AG04449 (cell line): ENCODE measurements at regions of chr19 and their contacts with region 1.

Region 1: GRCh38 chr19:52237771-52238400 is 31.5 kb upstream of the ZNF766 start:
- DNase-seq: peak; percentile 23
- H3K4me3 ChIP-seq: no peak overlapping the region
- CTCF ChIP-seq: peak; percentile 83

Region 2: DNA sequence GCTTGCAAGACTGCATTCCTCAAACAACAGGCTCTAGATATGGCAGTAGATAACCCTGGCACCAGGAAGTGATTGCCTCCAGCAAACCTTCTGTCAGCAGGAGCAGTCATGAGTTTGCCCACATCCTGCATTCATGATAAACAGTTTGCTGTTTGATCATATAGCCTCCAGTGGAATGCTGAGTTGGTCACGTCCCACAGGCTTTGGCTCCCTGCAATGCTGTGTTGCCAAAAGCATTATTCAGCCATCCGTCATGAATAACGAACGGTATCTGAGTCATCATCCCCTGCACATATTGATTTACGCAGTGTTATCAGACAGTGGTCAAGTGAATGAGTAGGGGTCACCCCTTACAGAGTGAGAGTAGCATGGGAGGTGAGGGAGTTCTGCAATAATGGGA is 167.4 kb before region 1 on chr19:
- CTCF ChIA-PET with region 1: no interaction called
- POLR2A ChIA-PET with region 1: no interaction called
- DNase-seq: no peak
- H3K4me3 ChIP-seq: no peak overlapping the region
- CTCF ChIP-seq: no peak

Region 3: DNA sequence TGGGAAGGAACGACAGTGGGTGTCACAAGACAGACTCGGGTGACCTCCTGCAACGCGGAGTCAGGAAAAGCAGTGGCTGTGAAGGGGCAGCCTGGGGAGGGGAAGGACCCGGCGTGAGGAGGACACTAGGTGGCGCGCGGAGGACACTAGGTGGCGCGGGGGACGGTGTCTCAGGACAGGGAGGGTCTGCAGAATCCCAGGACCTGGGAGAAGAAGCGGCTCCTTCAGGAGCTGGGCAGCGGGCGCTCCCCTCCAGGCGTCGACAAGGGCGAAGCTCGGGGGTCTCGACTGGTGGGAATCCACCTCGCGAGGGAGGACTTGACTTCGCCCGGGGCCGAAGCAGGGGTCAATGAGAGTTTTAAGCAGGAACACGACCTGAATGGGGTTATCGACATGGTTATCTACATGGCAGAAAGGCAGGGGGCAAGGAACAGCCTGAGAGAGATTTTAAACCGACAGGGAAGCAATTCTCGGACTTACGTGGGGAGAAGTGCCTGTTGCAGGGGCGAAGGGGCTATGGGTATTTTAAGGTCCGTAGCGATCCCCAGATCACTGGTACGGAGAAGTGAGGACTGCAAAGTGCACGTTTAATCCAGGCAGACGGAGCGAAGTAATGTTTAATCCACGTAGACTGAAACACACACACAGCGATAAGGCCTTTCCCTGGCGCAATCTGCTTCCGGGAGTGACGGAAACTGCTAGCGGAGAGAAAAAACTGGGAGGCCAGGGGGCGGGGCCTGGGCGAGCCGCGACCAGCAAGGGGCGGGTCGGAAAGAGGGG is 98.4 kb before region 1 on chr19 and contains the start of gene ZNF616:
- CTCF ChIA-PET with region 1: interaction called, 49 read pairs
- POLR2A ChIA-PET with region 1: no interaction called
- DNase-seq: peak; percentile 40
- H3K4me3 ChIP-seq: peak within 1 kb of the TSS; percentile 98
- CTCF ChIP-seq: peak; percentile 91

Region 4: GRCh38 chr19:52200044-52200443 is 37.8 kb before region 1 on chr19:
- CTCF ChIA-PET with region 1: interaction called, 12 read pairs
- POLR2A ChIA-PET with region 1: no interaction called
- DNase-seq: peak; percentile 42
- H3K4me3 ChIP-seq: no peak overlapping the region
- CTCF ChIP-seq: no peak

Region 5: GRCh38 chr19:52227196-52227940 is 10.5 kb before region 1 on chr19:
- CTCF ChIA-PET with region 1: interaction called, 10 read pairs
- POLR2A ChIA-PET with region 1: no interaction called
- DNase-seq: no peak
- H3K4me3 ChIP-seq: no peak overlapping the region
- CTCF ChIP-seq: no peak

Region 6: DNA sequence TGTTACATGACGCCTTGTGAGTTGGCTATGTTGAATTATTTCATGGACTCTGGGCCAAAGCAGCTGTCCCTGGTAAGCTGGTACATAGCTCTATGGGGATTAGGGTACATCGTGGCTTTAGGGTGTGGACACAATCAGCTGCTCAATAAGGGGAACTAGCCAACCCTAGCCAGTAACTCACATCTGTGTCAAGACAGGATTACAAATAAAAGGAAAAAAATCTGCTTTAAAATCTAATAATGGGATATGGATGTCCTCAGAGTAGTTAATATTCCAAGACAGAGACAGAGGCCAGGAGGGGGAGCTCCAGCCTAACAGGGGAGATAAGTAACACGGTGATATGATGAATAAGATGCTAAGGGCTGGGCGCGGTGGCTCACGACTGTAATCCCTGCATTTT is 10.4 kb after region 1 on chr19:
- CTCF ChIA-PET with region 1: interaction called, 11 read pairs
- POLR2A ChIA-PET with region 1: no interaction called
- DNase-seq: no peak
- H3K4me3 ChIP-seq: no peak overlapping the region
- CTCF ChIP-seq: peak; percentile 39

Region 7: DNA sequence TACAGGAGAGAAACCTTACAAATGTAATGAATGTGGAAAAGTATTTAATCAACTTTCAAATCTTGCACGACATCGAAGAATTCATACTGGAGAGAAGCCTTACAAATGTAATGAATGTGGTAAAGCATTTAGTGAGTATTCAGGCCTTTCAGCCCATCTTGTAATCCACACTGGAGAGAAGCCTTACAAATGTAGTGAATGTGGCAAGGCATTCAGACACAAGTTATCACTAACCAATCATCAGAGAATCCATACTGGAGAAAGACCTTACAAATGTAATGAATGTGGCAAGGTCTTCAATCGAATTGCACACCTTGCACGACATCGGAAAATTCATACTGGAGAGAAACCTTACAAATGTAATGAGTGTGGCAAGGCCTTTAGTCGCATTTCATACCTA is 84.5 kb after region 1 on chr19:
- CTCF ChIA-PET with region 1: no interaction called
- POLR2A ChIA-PET with region 1: no interaction called
- DNase-seq: no peak
- H3K4me3 ChIP-seq: no peak overlapping the region
- CTCF ChIP-seq: no peak